ENCODE measurements at regions of chr9 and their contacts with region 1.

Region 1: DNA sequence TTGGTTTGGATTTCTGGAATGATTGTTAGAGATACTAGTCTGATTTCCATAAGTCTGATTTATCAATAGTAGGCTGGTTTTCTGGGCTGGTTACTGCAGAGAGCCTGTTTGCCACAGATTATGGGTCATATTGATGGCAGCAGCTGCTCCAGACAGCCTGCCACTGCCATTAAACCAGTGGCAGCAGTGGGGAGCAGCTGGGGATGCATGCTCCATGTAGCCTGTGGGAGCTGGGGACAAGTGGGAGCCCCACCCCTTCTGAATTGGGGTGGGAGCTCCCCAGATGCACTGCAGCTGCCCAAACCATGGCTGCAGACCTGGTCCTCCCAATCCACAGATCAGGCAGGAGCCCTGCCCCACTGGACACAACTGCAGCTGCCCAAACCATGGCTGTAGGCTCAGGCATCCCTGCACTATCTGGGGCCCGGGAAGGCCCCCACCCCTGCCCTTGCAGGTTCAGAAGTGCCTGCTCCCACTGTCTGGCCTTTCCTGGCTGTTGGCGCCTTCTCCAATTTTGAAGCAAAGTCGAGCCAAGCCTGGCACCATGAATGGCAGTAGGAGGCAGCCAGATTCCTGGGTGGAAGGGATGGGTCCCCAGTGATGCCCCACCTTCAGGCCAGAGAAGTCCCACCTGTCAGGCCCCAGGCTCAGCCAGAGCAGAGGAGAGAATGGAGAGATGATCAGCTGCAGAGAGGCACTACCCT is 402.9 kb upstream of the TYRP1 start:
- DNase-seq: no peak
- ATAC-seq: no peak
- H3K4me3 ChIP-seq: no peak overlapping the region
- H3K4me3 Mint-ChIP-seq: no peak overlapping the region
- H3K27ac ChIP-seq: no peak overlapping the region
- H3K27ac Mint-ChIP-seq: no peak overlapping the region
- H3K4me1 ChIP-seq: no peaks in the 10 kb centered on the region
- H3K4me1 Mint-ChIP-seq: no peaks in the 10 kb centered on the region
- H3K27me3 ChIP-seq: no peaks in the 10 kb centered on the region
- H3K27me3 Mint-ChIP-seq: no peaks in the 10 kb centered on the region

Region 2: DNA sequence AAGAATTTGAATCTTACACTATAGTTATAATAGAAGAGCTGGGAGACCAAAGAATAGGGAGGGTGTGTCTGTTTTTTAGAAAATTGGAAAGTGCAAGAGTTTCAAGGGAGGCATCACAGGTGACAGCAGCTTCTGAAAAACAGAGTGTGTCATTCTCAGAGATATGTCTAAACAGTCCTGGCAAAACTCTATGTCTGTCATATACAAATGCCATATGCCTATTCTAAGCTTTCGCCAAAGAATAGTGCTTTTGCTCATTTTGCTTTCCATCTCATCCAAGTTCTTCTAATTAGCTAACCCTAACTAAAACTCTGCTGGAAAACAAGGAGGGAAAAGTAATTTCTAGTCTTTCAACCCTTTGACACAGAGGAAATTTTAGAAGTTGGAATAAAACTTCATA is 14.9 kb after region 1 on chr9:
- CTCF ChIA-PET with region 1: interaction called in 1 of 2 experiments, 11 read pairs
- POLR2A ChIA-PET with region 1: interaction called in 1 of 2 experiments, 3 read pairs
- DNase-seq: no peak
- ATAC-seq: no peak
- H3K4me3 ChIP-seq: no peak overlapping the region
- H3K4me3 Mint-ChIP-seq: no peak overlapping the region
- H3K27ac ChIP-seq: no peak overlapping the region
- H3K27ac Mint-ChIP-seq: no peak overlapping the region
- H3K4me1 ChIP-seq: no peaks in the 10 kb centered on the region
- H3K4me1 Mint-ChIP-seq: no peaks in the 10 kb centered on the region
- H3K27me3 ChIP-seq: no peaks in the 10 kb centered on the region
- H3K27me3 Mint-ChIP-seq: no peaks in the 10 kb centered on the region

Measured in T-cell (primary cell).